BJ (cell line): ENCODE measurements at regions of chr16 and their contacts with region 1.

Region 1: GRCh38 chr16:3945751-3946603 is 65.5 kb upstream of the CREBBP start:
- DNase-seq: peak; percentile 94
- H3K4me3 ChIP-seq: no peak overlapping the region
- H3K27me3 ChIP-seq: no peaks in the 10 kb centered on the region
- CTCF ChIP-seq: no peak

Region 2: GRCh38 chr16:3637371-3637923 is 308.5 kb before region 1 on chr16:
- CTCF ChIA-PET with region 1: no interaction called
- POLR2A ChIA-PET with region 1: no interaction called
- DNase-seq: no peak
- H3K4me3 ChIP-seq: no peak overlapping the region
- H3K27me3 ChIP-seq: no peaks in the 10 kb centered on the region
- CTCF ChIP-seq: no peak

Region 3: GRCh38 chr16:3849751-3850543 is 96.0 kb before region 1 on chr16:
- CTCF ChIA-PET with region 1: no interaction called
- POLR2A ChIA-PET with region 1: interaction called, 35 read pairs
- DNase-seq: no peak
- H3K4me3 ChIP-seq: no peak overlapping the region
- H3K27me3 ChIP-seq: no peaks in the 10 kb centered on the region
- CTCF ChIP-seq: no peak

Region 4: GRCh38 chr16:3873482-3874173 is 72.3 kb before region 1 on chr16:
- CTCF ChIA-PET with region 1: no interaction called
- POLR2A ChIA-PET with region 1: interaction called, 16 read pairs
- DNase-seq: no peak
- H3K4me3 ChIP-seq: no peak overlapping the region
- H3K27me3 ChIP-seq: no peaks in the 10 kb centered on the region
- CTCF ChIP-seq: no peak

Region 5: GRCh38 chr16:3922276-3922675 is 23.7 kb before region 1 on chr16:
- CTCF ChIA-PET with region 1: no interaction called
- POLR2A ChIA-PET with region 1: no interaction called
- DNase-seq: no peak
- H3K4me3 ChIP-seq: no peak overlapping the region
- H3K27me3 ChIP-seq: peaks cover 2% of the 10 kb centered on the region; the same call in 1 of the 2 replicates
- CTCF ChIP-seq: no peak

Region 6: GRCh38 chr16:3983081-3983520 is 37.1 kb after region 1 on chr16:
- CTCF ChIA-PET with region 1: interaction called, 14 read pairs
- POLR2A ChIA-PET with region 1: no interaction called
- DNase-seq: no peak
- H3K4me3 ChIP-seq: no peak overlapping the region
- H3K27me3 ChIP-seq: no peaks in the 10 kb centered on the region
- CTCF ChIP-seq: peak; percentile 84

Region 7: GRCh38 chr16:4032768-4033167 is 86.8 kb after region 1 on chr16:
- CTCF ChIA-PET with region 1: no interaction called
- POLR2A ChIA-PET with region 1: no interaction called
- DNase-seq: no peak
- H3K4me3 ChIP-seq: no peak overlapping the region
- H3K27me3 ChIP-seq: no peaks in the 10 kb centered on the region
- CTCF ChIP-seq: no peak

Region 8: DNA sequence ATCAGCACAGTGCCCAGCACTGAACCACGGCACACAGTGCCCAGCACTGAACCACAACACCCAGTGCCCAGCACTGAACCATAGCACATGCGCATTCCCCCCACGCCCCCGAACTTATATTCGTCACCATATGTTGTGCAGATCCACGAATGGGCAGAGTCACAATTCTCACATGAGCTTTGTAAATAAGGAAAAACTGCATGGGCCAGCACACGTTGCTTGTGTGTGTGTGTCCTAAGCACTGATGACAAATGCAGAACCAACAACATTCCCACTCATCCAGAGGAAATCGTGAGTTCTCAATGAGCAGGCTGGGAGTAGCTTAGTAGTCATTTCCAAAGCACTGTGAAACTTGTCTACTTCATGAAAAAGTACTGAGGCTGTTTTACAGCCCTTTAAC is 100.2 kb after region 1 on chr16:
- CTCF ChIA-PET with region 1: no interaction called
- POLR2A ChIA-PET with region 1: interaction called, 18 read pairs
- DNase-seq: no peak
- H3K4me3 ChIP-seq: no peak overlapping the region
- H3K27me3 ChIP-seq: no peaks in the 10 kb centered on the region
- CTCF ChIP-seq: no peak

Region 9: DNA sequence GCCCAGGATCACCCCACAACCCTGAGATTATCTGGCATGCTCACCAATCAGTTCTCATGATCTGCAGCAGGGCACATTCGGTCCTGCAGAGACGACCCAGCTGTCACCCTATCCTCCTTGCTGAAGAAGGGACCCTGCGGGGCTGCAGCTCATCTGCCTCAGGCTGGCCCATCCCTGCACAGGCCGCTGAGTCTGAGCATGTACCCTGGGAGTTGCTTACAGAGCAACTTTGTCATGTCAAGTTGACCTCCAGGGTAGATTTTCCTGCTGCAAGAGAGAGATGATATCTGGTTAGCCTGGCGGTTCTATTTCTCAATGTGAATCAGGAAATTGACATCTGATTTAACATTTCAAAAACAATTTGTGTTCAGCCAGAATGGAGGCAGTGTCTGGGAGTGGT is 206.3 kb after region 1 on chr16:
- CTCF ChIA-PET with region 1: no interaction called
- POLR2A ChIA-PET with region 1: no interaction called
- DNase-seq: no peak
- H3K4me3 ChIP-seq: no peak overlapping the region
- H3K27me3 ChIP-seq: peaks cover 5% of the 10 kb centered on the region
- CTCF ChIP-seq: no peak